Ovary (tissue), 10 donors: ENCODE measurements at regions of chr13 and their contacts with region 1.

Region 1: DNA sequence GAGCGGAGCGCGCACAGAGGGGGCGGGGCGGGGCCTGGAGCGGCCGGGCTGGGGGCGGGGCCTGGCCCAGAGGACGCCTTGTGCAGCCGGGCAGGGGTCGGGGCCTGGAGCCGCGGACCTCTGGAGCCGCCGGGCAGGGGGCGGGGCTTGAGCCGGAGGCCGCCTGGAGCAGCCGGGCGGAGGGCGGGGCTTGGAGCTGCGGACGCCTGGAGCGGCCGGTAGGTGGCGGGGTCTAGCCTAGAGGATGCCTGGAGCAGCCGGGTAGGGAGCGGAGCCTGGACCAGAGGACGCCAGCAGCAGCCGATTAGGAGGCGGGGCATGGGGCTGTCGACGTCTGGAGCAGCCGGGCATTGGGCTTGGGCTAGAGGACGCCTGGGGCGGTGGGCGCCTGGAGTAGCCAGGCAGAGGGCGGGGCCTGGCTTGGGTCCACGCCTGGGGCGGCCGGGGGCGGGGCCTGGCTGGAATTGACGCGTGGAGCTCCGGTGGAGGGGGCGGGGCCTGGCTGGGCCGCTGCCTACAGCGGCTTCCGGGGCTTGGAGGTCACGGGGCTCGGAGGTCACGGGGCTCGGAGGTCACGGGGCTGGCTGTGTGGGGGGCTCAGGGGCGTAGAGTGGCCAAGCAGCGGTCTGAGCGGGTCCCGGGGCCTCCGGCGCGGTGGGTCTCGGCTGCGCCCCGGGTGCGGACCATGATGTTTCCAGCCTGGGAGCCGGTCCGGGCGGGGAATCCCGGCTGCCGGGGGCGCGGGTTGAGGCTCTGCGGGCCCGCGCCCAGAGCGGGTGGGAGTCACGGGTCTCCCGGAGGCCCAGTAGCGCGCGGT is at the start of gene ANKRD10:
- DNase-seq: peak; percentile 99 to 100 (median 99)
- H3K4me3 ChIP-seq: peak within 1 kb of the TSS; percentile 100
- H3K27ac ChIP-seq: peak within 1 kb of the TSS; percentile 96 to 97
- H3K4me1 ChIP-seq: peaks cover 20% of the 10 kb centered on the region
- H3K27me3 ChIP-seq: no peaks in the 10 kb centered on the region
- CTCF ChIP-seq: peak; percentile 89 to 98 (median 95)
- EP300 ChIP-seq: peak; percentile 56
- POLR2A ChIP-seq: peak; percentile 67
- total RNA-seq, gene ANKRD10: 84.0 to 172 (median 133) TPM

Region 2: DNA sequence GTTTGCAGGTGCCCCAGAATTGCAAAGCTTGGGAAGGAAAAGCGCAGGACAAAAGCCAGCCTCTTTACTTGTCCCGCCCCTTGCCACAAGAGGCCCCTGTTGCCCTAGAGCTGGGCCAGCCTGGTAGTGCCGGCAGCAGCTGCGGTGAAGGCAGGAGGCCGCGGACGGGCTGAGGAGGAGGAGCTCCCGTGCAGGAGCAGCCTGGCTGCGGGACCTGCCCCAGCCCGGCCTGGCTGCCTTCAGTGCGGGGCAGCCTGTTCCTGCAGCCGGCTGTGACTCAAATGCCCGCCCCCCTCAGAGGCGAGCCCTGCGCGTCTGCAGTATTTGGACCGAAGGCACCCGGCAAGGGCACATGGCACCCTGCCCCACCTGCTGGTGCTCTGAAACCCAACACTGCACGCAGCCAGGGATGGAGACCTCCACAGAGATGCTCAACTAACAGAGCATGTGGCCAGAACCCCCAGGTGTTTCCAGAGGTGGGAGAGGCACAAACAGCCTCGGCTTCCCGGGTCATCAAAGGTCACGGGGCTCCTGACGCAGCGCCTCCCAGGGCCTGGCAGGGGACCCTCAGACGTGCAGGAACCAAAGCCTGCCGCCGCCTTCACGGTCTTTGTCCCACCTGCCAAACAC is 270.3 kb before region 1 on chr13:
- intact Hi-C with region 1: loop called in 1 of 4 experiments (anchors 10 kb)
- DNase-seq: peak in 4 of 5 donors; percentile 65 to 78 (median 73)
- H3K4me3 ChIP-seq: no peak overlapping the region
- H3K27ac ChIP-seq: no peak overlapping the region
- H3K4me1 ChIP-seq: peaks cover 7% of the 10 kb centered on the region
- H3K27me3 ChIP-seq: no peaks in the 10 kb centered on the region
- CTCF ChIP-seq: no peak
- EP300 ChIP-seq: no peak
- POLR2A ChIP-seq: no peak

Region 3: GRCh38 chr13:110831447-110832204 is 83.6 kb before region 1 on chr13:
- intact Hi-C with region 1: loop called in 1 of 4 experiments (anchors 5 kb)
- DNase-seq: no peak
- H3K4me3 ChIP-seq: no peak overlapping the region
- H3K27ac ChIP-seq: no peak overlapping the region
- H3K4me1 ChIP-seq: peaks cover 6% of the 10 kb centered on the region
- H3K27me3 ChIP-seq: no peaks in the 10 kb centered on the region
- CTCF ChIP-seq: no peak
- EP300 ChIP-seq: no peak
- POLR2A ChIP-seq: no peak

Region 4: DNA sequence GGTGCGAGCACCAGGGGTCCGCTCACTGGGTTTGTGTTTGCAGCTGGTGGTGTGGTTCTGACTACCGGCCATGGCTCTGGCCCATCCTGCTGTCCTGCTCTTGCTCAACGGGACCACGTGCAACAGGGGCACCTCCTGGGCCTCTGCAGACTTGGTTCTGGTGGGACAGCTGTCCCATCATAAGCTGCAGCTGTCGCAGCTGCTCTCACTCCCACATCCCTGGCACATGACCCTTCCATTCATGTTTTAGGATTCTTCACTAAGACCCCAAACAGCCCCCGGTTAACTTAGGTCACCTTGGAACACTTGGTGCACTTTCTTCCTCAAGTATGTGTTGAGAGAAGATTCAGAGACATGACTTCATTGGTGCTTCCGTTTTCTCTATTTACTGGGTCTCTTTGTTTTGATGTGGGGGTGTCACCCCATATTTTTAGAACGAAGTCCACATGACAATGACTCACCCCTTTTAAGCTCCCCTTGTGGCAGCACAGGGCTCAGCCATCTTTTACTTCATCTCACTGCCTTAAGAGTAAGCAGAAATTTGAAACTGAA is 131.4 kb after region 1 on chr13:
- intact Hi-C with region 1: loop called in 1 of 4 experiments (anchors 10 kb)
- DNase-seq: no peak
- H3K4me3 ChIP-seq: no peak overlapping the region
- H3K27ac ChIP-seq: no peak overlapping the region
- H3K4me1 ChIP-seq: peaks cover 2% of the 10 kb centered on the region
- H3K27me3 ChIP-seq: no peaks in the 10 kb centered on the region
- CTCF ChIP-seq: no peak
- EP300 ChIP-seq: no peak
- POLR2A ChIP-seq: no peak

Region 5: GRCh38 chr13:111216166-111216960 is 301.1 kb after region 1 on chr13:
- intact Hi-C with region 1: loop called in 2 of 4 experiments (anchors 10 kb)
- DNase-seq: peak; percentile 36 to 65 (median 59)
- H3K4me3 ChIP-seq: no peak overlapping the region
- H3K27ac ChIP-seq: peak overlapping the region in 1 of 2 donors; percentile 55
- H3K4me1 ChIP-seq: peaks cover 9% of the 10 kb centered on the region
- H3K27me3 ChIP-seq: no peaks in the 10 kb centered on the region
- CTCF ChIP-seq: peak; percentile 6 to 36 (median 31)
- EP300 ChIP-seq: no peak
- POLR2A ChIP-seq: no peak